Activated naive CD4-positive, alpha-beta T cell treated with anti-CD3 and anti-CD28 coated beads for 36 hours (primary cell): ENCODE measurements at regions of chr1 and their contacts with region 1.

Region 1: GRCh38 chr1:149886396-149887195 is 12.8 kb upstream of the BOLA1 start:
- DNase-seq: peak; percentile 92
- H3K4me3 Mint-ChIP-seq: no peak overlapping the region
- H3K27ac Mint-ChIP-seq: no peak overlapping the region
- H3K4me1 Mint-ChIP-seq: peaks cover 12% of the 10 kb centered on the region
- H3K27me3 Mint-ChIP-seq: no peaks in the 10 kb centered on the region

Region 2: GRCh38 chr1:149899460-149900293 is 13.1 kb after region 1 on chr1 and contains the start of gene BOLA1:
- CTCF ChIA-PET with region 1: interaction called, 3 read pairs
- intact Hi-C with region 1: loop called (anchors 1 kb)
- DNase-seq: peak; percentile 90
- H3K4me3 Mint-ChIP-seq: peak within 1 kb of the TSS; percentile 97
- H3K27ac Mint-ChIP-seq: peak within 1 kb of the TSS; percentile 94
- H3K4me1 Mint-ChIP-seq: peaks cover 20% of the 10 kb centered on the region
- H3K27me3 Mint-ChIP-seq: no peaks in the 10 kb centered on the region
- total RNA-seq, gene BOLA1: 24.7 to 28.7 TPM

Region 3: DNA sequence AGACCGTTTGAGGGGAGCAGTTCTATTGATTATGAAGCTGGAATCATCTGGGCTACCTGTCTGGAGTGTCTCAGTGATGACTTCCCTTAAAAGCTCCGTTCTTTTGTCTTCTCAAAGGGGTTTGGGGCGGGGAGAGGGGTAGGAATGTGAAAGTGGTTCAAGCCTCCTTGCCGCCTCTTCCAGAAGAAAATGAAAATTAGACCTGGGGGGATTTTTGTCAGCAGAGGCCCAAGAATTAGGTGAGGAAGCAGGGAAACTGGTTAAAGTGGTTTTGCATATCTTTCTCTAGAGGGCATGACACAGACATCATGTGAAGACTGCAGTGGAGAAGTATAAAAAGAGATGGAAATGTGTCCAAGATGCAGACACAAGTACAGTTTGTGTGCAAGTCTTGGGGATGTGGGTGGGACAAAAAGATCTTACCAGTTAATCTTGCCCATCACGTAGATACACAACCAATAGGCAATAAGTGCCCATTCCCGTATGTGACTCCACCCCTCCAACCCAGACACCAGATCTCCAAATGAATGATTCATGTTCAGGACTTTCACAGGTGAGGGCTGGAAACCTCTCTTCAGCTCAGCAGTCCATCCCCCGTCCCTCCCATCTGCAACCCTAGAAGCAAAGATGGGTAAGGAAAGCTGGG is 50.6 kb after region 1 on chr1:
- CTCF ChIA-PET with region 1: interaction called, 3 read pairs
- intact Hi-C with region 1: loop called (anchors 1 kb)
- DNase-seq: no peak
- H3K4me3 Mint-ChIP-seq: no peak overlapping the region
- H3K27ac Mint-ChIP-seq: peak overlapping the region; percentile 54
- H3K4me1 Mint-ChIP-seq: peaks cover 41% of the 10 kb centered on the region
- H3K27me3 Mint-ChIP-seq: no peaks in the 10 kb centered on the region

Region 4: DNA sequence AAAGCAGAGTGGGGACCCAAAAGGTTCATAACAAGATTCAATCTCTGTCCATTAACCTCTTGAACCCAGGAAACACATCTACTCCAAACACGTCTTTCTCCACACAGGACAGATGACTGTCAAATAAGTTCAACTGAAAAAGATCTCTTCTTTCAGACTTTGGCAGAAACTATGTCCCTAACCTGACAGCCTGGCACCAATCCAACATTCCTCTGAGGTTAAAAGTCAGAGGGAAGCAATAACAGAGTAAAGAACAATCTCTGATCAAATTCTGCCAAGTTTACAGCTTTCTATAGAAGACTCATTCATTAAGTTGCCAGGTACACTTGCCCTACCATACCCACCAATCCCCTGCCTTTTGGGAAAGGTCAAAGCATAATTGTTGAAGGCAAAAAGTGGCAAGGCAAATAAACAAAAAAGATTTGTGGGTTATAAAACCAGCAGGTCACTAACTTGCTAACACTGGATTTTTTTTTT is 92.0 kb after region 1 on chr1:
- CTCF ChIA-PET with region 1: no interaction called
- intact Hi-C with region 1: no loop called
- DNase-seq: no peak
- H3K4me3 Mint-ChIP-seq: no peak overlapping the region
- H3K27ac Mint-ChIP-seq: no peak overlapping the region
- H3K4me1 Mint-ChIP-seq: peaks cover 29% of the 10 kb centered on the region
- H3K27me3 Mint-ChIP-seq: no peaks in the 10 kb centered on the region

Region 5: DNA sequence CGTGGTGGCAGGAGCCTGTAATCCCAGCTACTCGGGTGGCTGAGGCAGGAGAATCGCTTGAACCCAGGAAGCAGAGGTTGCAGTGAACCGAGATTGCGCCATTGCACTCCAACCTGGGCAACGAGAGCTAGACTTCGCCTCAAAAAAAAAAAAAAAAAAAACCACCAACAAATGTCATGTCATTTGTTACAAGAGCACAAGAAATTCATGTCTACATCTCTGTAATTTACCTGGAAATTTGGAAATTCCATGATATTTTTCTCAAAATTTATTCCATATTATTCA is 164.4 kb after region 1 on chr1:
- CTCF ChIA-PET with region 1: interaction called, 5 read pairs
- intact Hi-C with region 1: loop called (anchors 1 kb)
- DNase-seq: no peak
- H3K4me3 Mint-ChIP-seq: no peak overlapping the region
- H3K27ac Mint-ChIP-seq: no peak overlapping the region
- H3K4me1 Mint-ChIP-seq: peaks cover 2% of the 10 kb centered on the region
- H3K27me3 Mint-ChIP-seq: no peaks in the 10 kb centered on the region

Region 6: DNA sequence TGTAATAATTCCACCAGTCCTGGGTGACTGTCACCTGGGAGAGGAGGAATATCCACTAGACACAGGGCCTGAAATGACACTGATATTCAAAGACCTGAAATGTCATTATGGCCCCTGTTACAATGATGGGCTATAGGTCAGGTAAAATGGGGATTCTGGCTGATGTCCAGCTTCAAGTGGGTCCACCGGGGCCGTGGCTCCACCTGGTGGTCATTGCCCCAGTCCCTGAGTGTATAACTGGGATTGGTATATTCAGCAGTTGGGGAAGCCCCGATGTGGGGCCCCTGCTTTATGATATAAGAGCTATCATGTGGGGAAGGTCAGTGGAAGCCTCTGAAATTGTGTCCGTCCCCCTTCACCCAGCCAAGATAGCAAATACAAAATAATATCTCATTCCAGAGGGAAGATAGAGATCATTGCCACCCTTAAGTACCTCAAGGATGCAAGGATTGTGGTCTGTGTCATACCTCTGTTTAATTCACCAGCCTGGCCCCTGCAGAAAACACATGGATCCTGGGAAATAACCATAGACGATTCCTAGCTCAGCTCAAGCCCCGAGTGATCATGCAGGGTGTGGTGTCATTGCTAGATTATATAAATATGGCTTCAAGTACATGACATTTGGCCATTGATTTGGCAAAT is 282.5 kb after region 1 on chr1:
- CTCF ChIA-PET with region 1: interaction called, 3 read pairs
- intact Hi-C with region 1: loop called (anchors 5 kb)
- DNase-seq: peak; percentile 72
- H3K4me3 Mint-ChIP-seq: no peak overlapping the region
- H3K27ac Mint-ChIP-seq: no peak overlapping the region
- H3K4me1 Mint-ChIP-seq: no peaks in the 10 kb centered on the region
- H3K27me3 Mint-ChIP-seq: no peaks in the 10 kb centered on the region

Region 7: GRCh38 chr1:150221552-150221951 is 335.0 kb after region 1 on chr1:
- CTCF ChIA-PET with region 1: no interaction called
- intact Hi-C with region 1: no loop called
- DNase-seq: no peak
- H3K4me3 Mint-ChIP-seq: no peak overlapping the region
- H3K27ac Mint-ChIP-seq: no peak overlapping the region
- H3K4me1 Mint-ChIP-seq: no peaks in the 10 kb centered on the region
- H3K27me3 Mint-ChIP-seq: no peaks in the 10 kb centered on the region

Region 8: DNA sequence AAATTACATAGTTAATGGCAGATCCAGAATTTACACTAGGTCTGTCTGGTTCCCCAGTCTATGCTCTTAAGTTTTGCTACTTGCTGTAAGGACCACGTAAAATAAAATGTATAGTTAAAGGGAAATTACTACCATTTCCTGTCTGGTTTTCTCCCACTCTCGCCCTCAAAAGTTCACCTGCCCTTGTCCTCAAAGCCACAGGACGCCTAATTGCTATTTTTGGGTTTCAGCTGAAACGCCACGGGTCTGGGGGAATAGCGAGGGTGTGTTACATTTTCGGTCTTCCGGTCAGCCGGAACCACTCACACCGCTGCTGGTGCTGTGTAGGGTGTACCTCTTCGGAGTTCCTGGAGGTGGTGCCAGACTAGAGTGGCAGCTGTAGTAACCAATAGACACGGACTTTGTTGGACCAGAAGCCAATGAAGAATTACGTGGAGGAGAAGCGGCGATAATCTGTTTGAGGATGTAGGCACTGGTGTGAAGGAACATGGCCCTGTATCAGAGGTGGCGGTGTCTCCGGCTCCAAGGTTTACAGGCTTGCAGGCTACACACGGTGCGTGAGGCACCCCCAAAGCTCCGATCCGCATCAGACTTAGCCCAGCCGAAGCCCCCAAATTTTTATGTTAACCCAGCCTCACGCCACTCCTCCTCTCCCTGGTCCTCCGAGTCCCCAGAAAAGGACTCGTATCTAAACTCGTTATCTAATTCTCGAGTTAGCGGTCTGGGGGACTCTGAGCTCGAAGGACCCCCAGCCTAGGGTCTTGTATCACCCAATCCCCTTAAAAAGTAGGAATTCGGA is 600.6 kb after region 1 on chr1 and contains the start of gene TARS2:
- CTCF ChIA-PET with region 1: no interaction called
- intact Hi-C with region 1: no loop called
- DNase-seq: peak; percentile 99
- H3K4me3 Mint-ChIP-seq: peak within 1 kb of the TSS; percentile 98
- H3K27ac Mint-ChIP-seq: peak within 1 kb of the TSS; percentile 96
- H3K4me1 Mint-ChIP-seq: peaks cover 10% of the 10 kb centered on the region
- H3K27me3 Mint-ChIP-seq: no peaks in the 10 kb centered on the region
- total RNA-seq, gene TARS2: 43.7 to 46.0 TPM